ENCODE measurements at regions of chr9 and their contacts with region 1.

Region 1: GRCh38 chr9:32378993-32379729 is 5.3 kb upstream of the ACO1 start:
- DNase-seq: peak; percentile 62
- ATAC-seq: peak; percentile 80
- H3K4me3 ChIP-seq: no peak overlapping the region
- H3K27ac ChIP-seq: no peak overlapping the region
- H3K4me1 ChIP-seq: peaks cover 10% of the 10 kb centered on the region
- H3K27me3 ChIP-seq: peaks cover 4% of the 10 kb centered on the region; the same call in 1 of the 2 replicates
- CTCF ChIP-seq: peak; percentile 74

Region 2: GRCh38 chr9:32234451-32234850 is 144.7 kb before region 1 on chr9:
- CTCF ChIA-PET with region 1: no interaction called
- POLR2A ChIA-PET with region 1: no interaction called
- in situ Hi-C with region 1: no loop called
- intact Hi-C with region 1: no loop called
- DNase-seq: no peak
- ATAC-seq: no peak
- H3K4me3 ChIP-seq: no peak overlapping the region
- H3K27ac ChIP-seq: no peak overlapping the region
- H3K4me1 ChIP-seq: no peaks in the 10 kb centered on the region
- H3K27me3 ChIP-seq: no peaks in the 10 kb centered on the region
- CTCF ChIP-seq: no peak

Region 3: DNA sequence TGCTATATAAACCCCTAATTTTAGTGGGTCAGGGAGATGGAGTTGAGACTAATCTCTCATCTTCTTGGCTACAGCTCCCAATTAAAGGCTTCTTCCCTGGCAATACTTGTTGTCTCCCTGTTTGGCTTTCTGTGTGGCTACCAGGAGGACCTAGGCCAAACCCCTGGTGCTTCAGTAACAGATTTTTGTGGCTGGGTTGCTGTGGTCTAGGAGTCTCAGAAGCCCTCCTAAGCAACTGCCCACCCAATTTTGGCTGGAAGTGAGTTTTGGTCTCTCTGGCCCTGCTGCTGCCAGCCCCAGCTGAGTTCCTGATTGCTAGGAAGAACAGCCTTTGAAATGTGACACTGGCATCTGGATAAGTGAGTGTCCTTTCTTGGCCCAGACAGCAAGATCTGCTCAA is 137.1 kb after region 1 on chr9:
- CTCF ChIA-PET with region 1: interaction called, 3 read pairs
- POLR2A ChIA-PET with region 1: no interaction called
- in situ Hi-C with region 1: no loop called
- intact Hi-C with region 1: loop called (anchors 10 kb)
- DNase-seq: no peak
- ATAC-seq: no peak
- H3K4me3 ChIP-seq: no peak overlapping the region
- H3K27ac ChIP-seq: no peak overlapping the region
- H3K4me1 ChIP-seq: no peaks in the 10 kb centered on the region
- H3K27me3 ChIP-seq: no peaks in the 10 kb centered on the region
- CTCF ChIP-seq: no peak

Region 4: GRCh38 chr9:32571969-32572899 is 193.1 kb after region 1 on chr9:
- CTCF ChIA-PET with region 1: interaction called, 35 read pairs
- POLR2A ChIA-PET with region 1: interaction called, 4 read pairs
- in situ Hi-C with region 1: no loop called
- intact Hi-C with region 1: no loop called
- DNase-seq: peak; percentile 67
- ATAC-seq: peak; percentile 91
- H3K4me3 ChIP-seq: peak overlapping the region; percentile 95 to 97
- H3K27ac ChIP-seq: peak overlapping the region; percentile 97
- H3K4me1 ChIP-seq: peaks cover 14% of the 10 kb centered on the region; the same call in 1 of the 2 replicates
- H3K27me3 ChIP-seq: no peaks in the 10 kb centered on the region
- CTCF ChIP-seq: peak; percentile 89

Region 5: DNA sequence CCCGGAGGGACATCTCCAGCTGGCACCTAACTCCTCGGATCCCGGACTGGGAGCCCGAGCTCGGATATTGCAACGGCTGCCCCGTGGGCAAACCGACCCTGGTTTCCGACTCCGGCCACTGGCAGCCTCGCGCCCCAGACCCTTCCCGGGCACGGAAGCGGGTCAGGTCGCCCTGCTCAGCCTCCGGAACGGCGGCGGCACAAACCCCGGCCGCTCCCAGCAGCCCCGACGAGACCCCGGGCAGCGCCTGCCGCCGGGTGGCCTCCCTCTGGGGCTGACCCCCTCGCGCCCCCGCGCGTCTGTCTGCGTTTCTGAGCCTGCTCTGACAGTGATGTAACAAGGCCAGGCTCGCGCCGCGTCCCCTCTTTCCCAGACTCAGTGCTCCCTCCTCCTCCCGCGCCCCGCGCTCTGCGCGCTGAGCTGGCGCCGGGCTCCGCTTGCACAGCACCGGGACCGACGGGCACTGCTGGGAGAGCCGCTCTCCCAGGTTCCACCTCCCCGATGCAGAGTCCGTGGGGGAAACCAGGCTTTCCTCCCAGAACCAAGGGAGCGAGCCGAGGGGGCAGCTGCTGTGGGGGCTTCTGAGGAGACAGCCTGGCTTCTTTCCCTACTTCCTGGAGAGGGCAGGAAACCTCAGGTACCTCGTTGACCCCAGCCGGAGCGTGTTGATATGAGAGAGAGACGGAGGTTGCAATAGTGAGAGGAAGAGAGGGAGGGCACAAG is 404.2 kb after region 1 on chr9 and contains the start of gene TMEM215:
- CTCF ChIA-PET with region 1: no interaction called
- POLR2A ChIA-PET with region 1: no interaction called
- in situ Hi-C with region 1: no loop called
- intact Hi-C with region 1: no loop called
- DNase-seq: no peak
- ATAC-seq: peak; percentile 66; the same call in 1 of the 2 replicates
- H3K4me3 ChIP-seq: no peak within 1 kb of the TSS
- H3K27ac ChIP-seq: no peak within 1 kb of the TSS
- H3K4me1 ChIP-seq: peaks cover 6% of the 10 kb centered on the region; the same call in 1 of the 2 replicates
- H3K27me3 ChIP-seq: peaks cover 53% of the 10 kb centered on the region
- CTCF ChIP-seq: no peak
- total RNA-seq, gene TMEM215: not detected

Region 6: DNA sequence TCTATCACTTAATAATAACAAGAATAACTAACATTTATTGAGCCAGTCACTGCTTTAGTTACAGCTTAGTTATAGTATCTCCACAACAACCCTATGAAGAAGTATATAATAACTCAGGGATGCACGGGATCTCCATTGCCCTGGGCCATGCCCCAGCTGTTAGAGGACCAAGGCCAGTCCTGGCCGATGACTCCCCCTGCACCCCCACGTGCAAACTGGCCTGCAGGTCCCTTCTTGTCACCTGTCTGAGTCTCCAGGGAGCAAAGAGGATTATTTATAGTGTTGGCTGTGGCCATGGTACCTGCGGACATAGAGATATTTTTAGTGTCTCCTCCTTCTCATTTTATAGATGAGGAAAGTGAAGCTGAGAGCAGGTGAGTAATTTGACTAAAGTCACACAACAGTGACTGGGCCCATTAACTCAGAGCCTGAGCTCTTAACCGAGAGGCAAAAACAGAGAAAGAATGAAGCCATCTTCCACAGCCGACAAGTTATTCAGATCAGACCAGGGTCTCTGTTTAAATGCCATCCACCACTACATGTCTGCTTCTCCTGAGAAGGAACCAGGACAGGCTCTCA is 498.6 kb after region 1 on chr9:
- CTCF ChIA-PET with region 1: no interaction called
- POLR2A ChIA-PET with region 1: no interaction called
- in situ Hi-C with region 1: no loop called
- intact Hi-C with region 1: loop called (anchors 10 kb)
- DNase-seq: no peak
- ATAC-seq: no peak
- H3K4me3 ChIP-seq: no peak overlapping the region
- H3K27ac ChIP-seq: no peak overlapping the region
- H3K4me1 ChIP-seq: no peaks in the 10 kb centered on the region
- H3K27me3 ChIP-seq: no peaks in the 10 kb centered on the region
- CTCF ChIP-seq: no peak

Region 7: GRCh38 chr9:32968101-32969011 is 589.2 kb after region 1 on chr9:
- CTCF ChIA-PET with region 1: interaction called, 3 read pairs
- POLR2A ChIA-PET with region 1: interaction called, 7 read pairs
- in situ Hi-C with region 1: no loop called
- intact Hi-C with region 1: loop called (anchors 5 kb)
- DNase-seq: peak; percentile 10
- ATAC-seq: peak; percentile 64; the same call in 1 of the 2 replicates
- H3K4me3 ChIP-seq: no peak overlapping the region
- H3K27ac ChIP-seq: no peak overlapping the region
- H3K4me1 ChIP-seq: no peaks in the 10 kb centered on the region
- H3K27me3 ChIP-seq: no peaks in the 10 kb centered on the region
- CTCF ChIP-seq: peak; percentile 81; the same call in 1 of the 2 replicates

Region 8: DNA sequence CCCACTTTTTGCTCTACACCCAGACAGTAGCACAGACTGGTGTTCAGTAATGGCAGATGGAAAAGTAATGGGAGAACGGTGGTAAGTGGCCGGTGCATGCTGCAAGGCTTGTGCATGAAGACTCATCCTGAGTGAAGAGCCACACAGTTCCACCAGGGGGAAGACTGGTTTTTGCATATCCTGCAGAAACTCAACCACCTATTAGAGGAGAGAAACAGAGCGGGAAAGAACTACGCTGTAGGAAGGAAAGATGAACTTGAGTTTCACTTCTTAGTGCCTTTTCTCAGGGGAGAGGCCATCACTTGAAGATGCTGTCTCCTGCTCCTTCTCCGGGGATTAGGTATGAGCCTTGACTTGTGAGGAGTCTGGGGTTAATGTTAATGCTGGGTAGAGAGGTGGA is 1406.8 kb after region 1 on chr9:
- CTCF ChIA-PET with region 1: no interaction called
- POLR2A ChIA-PET with region 1: no interaction called
- in situ Hi-C with region 1: no loop called
- intact Hi-C with region 1: no loop called
- DNase-seq: no peak
- ATAC-seq: peak; percentile 78
- H3K4me3 ChIP-seq: no peak overlapping the region
- H3K27ac ChIP-seq: no peak overlapping the region
- H3K4me1 ChIP-seq: no peaks in the 10 kb centered on the region
- H3K27me3 ChIP-seq: 0 out of 2 replicates have a peak, but pooled peaks cover 2% of the 10 kb centered on the region
- CTCF ChIP-seq: peak; percentile 37